PC-3 (cell line): ENCODE measurements at regions of chrX and their contacts with region 1.

Region 1: DNA sequence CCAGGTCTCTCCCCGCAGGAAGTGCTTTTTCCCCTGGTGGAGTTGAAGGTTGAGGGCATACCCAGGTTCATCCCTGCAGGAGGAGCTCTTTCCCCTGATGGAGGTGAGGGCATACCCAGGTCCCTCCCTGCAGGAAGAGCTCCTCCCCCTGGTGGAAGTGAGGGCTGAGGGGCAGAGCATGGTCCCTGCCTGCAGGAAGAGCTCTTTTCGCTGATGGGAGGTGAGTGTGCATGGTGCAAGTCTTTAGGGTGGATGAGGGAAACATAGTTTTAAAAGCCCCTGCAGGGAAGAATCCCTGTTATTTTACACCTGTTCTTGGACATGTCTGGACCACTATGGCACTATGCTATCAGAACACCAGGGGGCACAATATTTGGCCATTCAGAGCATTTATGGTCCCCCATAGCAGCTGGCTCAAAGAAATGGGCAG is 43.7 kb upstream of the PUDP start:
- DNase-seq: peak; percentile 21
- ATAC-seq: peak; percentile 61
- H3K4me3 ChIP-seq: no peak overlapping the region
- H3K27ac ChIP-seq: no peak overlapping the region
- H3K4me1 ChIP-seq: no peaks in the 10 kb centered on the region
- H3K27me3 ChIP-seq: no peaks in the 10 kb centered on the region
- CTCF ChIP-seq: peak; percentile 68

Region 2: GRCh38 chrX:7047951-7048350 is 143.7 kb before region 1 on chrX:
- CTCF ChIA-PET with region 1: no interaction called
- POLR2A ChIA-PET with region 1: no interaction called
- intact Hi-C with region 1: no loop called
- DNase-seq: peak; percentile 17
- ATAC-seq: no peak
- H3K4me3 ChIP-seq: no peak overlapping the region
- H3K27ac ChIP-seq: no peak overlapping the region
- H3K4me1 ChIP-seq: no peaks in the 10 kb centered on the region
- H3K27me3 ChIP-seq: no peaks in the 10 kb centered on the region
- CTCF ChIP-seq: peak; percentile 31; the same call in 1 of the 2 replicates

Region 3: DNA sequence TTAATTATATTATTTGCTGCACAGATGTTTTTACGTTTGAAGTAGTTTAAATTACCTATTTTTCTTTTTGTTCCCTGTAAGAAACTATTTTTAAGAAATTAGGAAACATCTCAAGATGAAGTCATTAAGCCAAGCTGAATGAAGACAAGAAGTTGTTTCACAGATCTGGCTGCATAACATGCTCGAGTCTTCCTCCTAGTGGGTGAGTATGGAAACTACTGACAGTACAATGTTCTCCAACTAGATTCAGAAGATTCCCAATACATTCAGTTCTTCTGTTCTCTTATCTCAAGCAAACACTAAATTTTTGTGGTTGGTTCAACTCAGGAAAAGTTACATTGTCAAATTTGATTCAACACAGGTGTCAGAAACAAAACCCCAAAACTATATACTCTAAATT is 394.4 kb after region 1 on chrX:
- CTCF ChIA-PET with region 1: no interaction called
- POLR2A ChIA-PET with region 1: no interaction called
- intact Hi-C with region 1: loop called (anchors 10 kb)
- DNase-seq: peak; percentile 53
- ATAC-seq: no peak
- H3K4me3 ChIP-seq: no peak overlapping the region
- H3K27ac ChIP-seq: no peak overlapping the region
- H3K4me1 ChIP-seq: no peaks in the 10 kb centered on the region
- H3K27me3 ChIP-seq: no peaks in the 10 kb centered on the region
- CTCF ChIP-seq: peak; percentile 60